ENCODE measurements at regions of chr15 and their contacts with region 1.

Region 1: GRCh38 chr15:52735231-52736089 is 54.7 kb downstream of the ONECUT1 start:
- DNase-seq: peak; percentile 34 to 74 (median 69)
- H3K4me3 ChIP-seq: no peak overlapping the region
- H3K4me3 Mint-ChIP-seq: no peak overlapping the region
- H3K27ac ChIP-seq: no peak overlapping the region
- H3K27ac Mint-ChIP-seq: no peak overlapping the region
- H3K4me1 ChIP-seq: peaks cover 2% of the 10 kb centered on the region
- H3K4me1 Mint-ChIP-seq: peaks cover under 1 to 9% (median 3%) of the 10 kb centered on the region in 3 donors
- H3K27me3 ChIP-seq: no peaks in the 10 kb centered on the region
- H3K27me3 Mint-ChIP-seq: peaks cover 8 to 12% of the 10 kb centered on the region in 2 donors

Region 2: DNA sequence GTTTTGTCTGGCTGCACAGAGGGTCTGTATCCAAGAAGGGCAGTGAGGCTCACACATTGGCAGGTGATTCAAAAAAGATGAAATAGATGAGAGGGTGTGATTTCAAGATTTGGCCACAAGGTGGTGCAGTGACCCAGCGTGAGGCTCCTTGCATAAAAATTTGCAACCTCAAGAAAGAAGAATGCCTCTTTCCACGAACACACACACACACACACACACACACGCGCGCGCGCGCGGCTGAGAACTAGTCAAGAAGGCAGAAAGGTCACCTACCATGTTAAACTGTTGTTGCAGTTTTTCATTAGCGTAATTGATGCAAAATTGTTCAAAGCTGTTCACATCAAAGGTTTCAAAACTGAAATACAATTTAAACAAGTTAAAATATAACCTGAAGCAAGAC is 479.1 kb before region 1 on chr15:
- CTCF ChIA-PET with region 1: interaction called, 62 read pairs
- POLR2A ChIA-PET with region 1: no interaction called
- DNase-seq: peak; percentile 52 to 83 (median 69)
- H3K4me3 ChIP-seq: peak overlapping the region; percentile 8
- H3K4me3 Mint-ChIP-seq: peak overlapping the region; percentile 10 to 88 (median 70)
- H3K27ac ChIP-seq: no peak overlapping the region
- H3K27ac Mint-ChIP-seq: peak overlapping the region in 7 of 8 donors; percentile 14 to 86 (median 67)
- H3K4me1 ChIP-seq: peaks cover 14% of the 10 kb centered on the region
- H3K4me1 Mint-ChIP-seq: peaks cover 10 to 21% (median 11%) of the 10 kb centered on the region in 3 donors
- H3K27me3 ChIP-seq: no peaks in the 10 kb centered on the region
- H3K27me3 Mint-ChIP-seq: no peaks in the 10 kb centered on the region

Region 3: GRCh38 chr15:52331490-52332240 is 403.8 kb before region 1 on chr15:
- CTCF ChIA-PET with region 1: interaction called, 24 read pairs
- POLR2A ChIA-PET with region 1: interaction called, 4 read pairs
- DNase-seq: peak in 4 of 5 donors; percentile 24 to 64 (median 58)
- H3K4me3 ChIP-seq: no peak overlapping the region
- H3K4me3 Mint-ChIP-seq: peak overlapping the region in 6 of 7 donors; percentile 33 to 65 (median 54)
- H3K27ac ChIP-seq: no peak overlapping the region
- H3K27ac Mint-ChIP-seq: peak overlapping the region; percentile 48 to 90 (median 83)
- H3K4me1 ChIP-seq: peaks cover 10% of the 10 kb centered on the region
- H3K4me1 Mint-ChIP-seq: peaks cover 12 to 18% (median 16%) of the 10 kb centered on the region in 3 donors
- H3K27me3 ChIP-seq: no peaks in the 10 kb centered on the region
- H3K27me3 Mint-ChIP-seq: no peaks in the 10 kb centered on the region

Region 4: DNA sequence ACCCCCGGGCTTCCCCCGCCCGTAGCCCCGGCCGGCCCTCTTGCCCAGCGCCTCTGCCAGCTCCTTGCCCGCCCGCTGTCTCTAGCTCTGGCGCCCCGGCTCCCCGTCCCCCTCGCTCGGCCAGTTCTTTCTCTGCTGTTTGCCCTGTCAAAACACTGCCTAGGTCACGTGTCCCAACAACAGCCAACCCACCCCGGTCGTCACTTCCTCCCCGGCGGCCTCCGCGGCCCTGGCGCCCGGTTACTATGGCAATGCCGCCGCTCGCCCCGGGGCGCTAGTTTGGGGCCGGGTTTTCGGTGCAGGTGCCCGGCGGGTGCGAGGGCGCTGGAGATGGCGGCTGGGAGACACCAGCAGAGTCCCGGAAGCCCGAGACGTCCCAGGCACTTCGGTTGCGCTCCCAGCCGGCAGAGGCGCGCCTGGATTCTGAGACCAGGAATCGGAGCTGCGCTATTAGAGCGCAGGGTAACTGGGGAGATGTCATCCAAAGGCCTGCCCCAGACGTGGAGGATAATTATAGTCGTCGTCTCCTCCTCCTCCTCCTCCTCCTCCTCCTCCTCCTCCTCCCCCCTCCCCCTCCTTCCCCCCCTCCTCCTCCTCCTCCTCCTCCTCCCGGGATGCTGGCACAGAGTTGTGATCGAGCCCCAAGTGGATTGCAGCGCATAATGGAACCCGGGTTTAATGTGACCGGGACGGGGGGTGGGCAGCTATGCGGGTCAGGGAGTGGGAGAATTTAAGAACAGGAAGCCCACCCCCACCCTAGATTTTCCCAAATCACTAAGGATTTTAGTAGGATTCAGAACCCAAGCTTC is 56.0 kb before region 1 on chr15 and contains the start of gene ATOSA:
- CTCF ChIA-PET with region 1: interaction called, 18 read pairs
- POLR2A ChIA-PET with region 1: interaction called, 6 read pairs
- DNase-seq: peak; percentile 88 to 95 (median 92)
- H3K4me3 ChIP-seq: peak within 1 kb of the TSS; percentile 87
- H3K4me3 Mint-ChIP-seq: peak within 1 kb of the TSS; percentile 92 to 100 (median 100)
- H3K27ac ChIP-seq: peak within 1 kb of the TSS; percentile 90
- H3K27ac Mint-ChIP-seq: peak within 1 kb of the TSS; percentile 98 to 100 (median 100)
- H3K4me1 ChIP-seq: peaks cover 41% of the 10 kb centered on the region
- H3K4me1 Mint-ChIP-seq: peaks cover 49 to 84% (median 72%) of the 10 kb centered on the region in 3 donors
- H3K27me3 ChIP-seq: no peaks in the 10 kb centered on the region
- H3K27me3 Mint-ChIP-seq: peaks cover 0 to 6% of the 10 kb centered on the region in 2 donors
- total RNA-seq, gene ATOSA: 17.1 to 17.2 TPM

Measured in CD8-positive, alpha-beta memory T cell (primary cell).